CD4-positive, alpha-beta memory T cell (primary cell): ENCODE measurements at regions of chr6 and their contacts with region 1.

Region 1: GRCh38 chr6:122449069-122449468 is 22.5 kb downstream of the SERINC1 start:
- DNase-seq: no peak
- H3K4me3 ChIP-seq: no peak overlapping the region
- H3K4me3 Mint-ChIP-seq: no peak overlapping the region
- H3K27ac ChIP-seq: no peak overlapping the region
- H3K27ac Mint-ChIP-seq: peak overlapping the region in 3 of 7 donors; percentile 42 to 88 (median 69)
- H3K4me1 ChIP-seq: no peaks in the 10 kb centered on the region
- H3K4me1 Mint-ChIP-seq: peaks cover 13 to 25% (median 21%) of the 10 kb centered on the region in 4 donors
- H3K27me3 ChIP-seq: no peaks in the 10 kb centered on the region
- H3K27me3 Mint-ChIP-seq: no peaks in the 10 kb centered on the region

Region 2: DNA sequence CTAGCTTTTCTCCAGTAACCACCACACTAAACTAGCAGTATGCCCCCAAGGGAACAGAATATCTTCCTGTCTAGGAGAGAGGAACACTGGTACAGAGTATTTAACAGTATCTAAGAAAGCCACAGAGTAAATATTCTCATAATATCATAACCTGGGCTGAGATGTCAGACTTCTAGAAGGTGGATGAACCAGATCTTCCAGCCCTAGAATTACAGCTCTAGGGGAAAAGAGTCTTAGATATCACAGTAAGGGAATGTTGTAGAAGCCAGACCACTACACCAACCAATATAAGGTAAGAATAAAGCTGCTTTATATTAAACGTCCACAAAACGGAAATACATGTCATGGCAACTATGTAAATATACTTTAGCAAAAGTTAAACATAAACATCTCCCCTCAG is 10.1 kb after region 1 on chr6:
- CTCF ChIA-PET with region 1: no interaction called
- POLR2A ChIA-PET with region 1: no interaction called
- intact Hi-C with region 1: loop called (anchors 1 kb)
- DNase-seq: no peak
- H3K4me3 ChIP-seq: no peak overlapping the region
- H3K4me3 Mint-ChIP-seq: peak overlapping the region in 7 of 8 donors; percentile 4 to 64 (median 27)
- H3K27ac ChIP-seq: peak overlapping the region; percentile 13
- H3K27ac Mint-ChIP-seq: peak overlapping the region; percentile 8 to 86 (median 46)
- H3K4me1 ChIP-seq: peaks cover 68% of the 10 kb centered on the region
- H3K4me1 Mint-ChIP-seq: peaks cover 63 to 93% (median 79%) of the 10 kb centered on the region in 4 donors
- H3K27me3 ChIP-seq: no peaks in the 10 kb centered on the region
- H3K27me3 Mint-ChIP-seq: no peaks in the 10 kb centered on the region